ENCODE measurements at regions of chrX and their contacts with region 1.

Region 1: DNA sequence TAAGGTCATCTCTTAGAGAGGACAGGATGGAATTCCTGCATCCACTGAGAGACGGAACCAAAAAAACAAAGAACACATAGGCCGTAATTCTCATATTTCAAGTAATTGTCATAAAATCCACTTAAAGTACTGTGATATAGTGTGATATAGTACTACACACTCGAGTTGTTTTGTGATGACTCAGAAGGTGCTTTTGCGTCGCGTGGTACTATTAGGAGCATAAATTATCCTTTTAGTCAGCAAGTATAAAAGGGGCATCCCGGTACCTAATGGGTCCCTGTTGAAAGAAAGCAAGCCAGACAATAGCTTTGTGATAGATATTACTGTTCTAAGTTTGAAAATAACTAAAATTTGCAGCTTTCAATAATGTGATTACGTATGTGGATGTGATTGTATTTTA is 55.3 kb downstream of the GPR143 start:
- DNase-seq: no peak
- H3K4me3 ChIP-seq: no peak overlapping the region
- H3K27ac ChIP-seq: no peak overlapping the region
- H3K4me1 ChIP-seq: peaks cover 0 to 9% (median 0%) of the 10 kb centered on the region in 3 donors
- H3K27me3 ChIP-seq: no peaks in the 10 kb centered on the region
- CTCF ChIP-seq: no peak
- POLR2A ChIP-seq: no peak

Region 2: GRCh38 chrX:8820910-8821527 is 889.3 kb before region 1 on chrX:
- intact Hi-C with region 1: loop called (anchors 10 kb)
- DNase-seq: no peak
- H3K4me3 ChIP-seq: no peak overlapping the region
- H3K27ac ChIP-seq: no peak overlapping the region
- H3K4me1 ChIP-seq: no peaks in the 10 kb centered on the region
- H3K27me3 ChIP-seq: no peaks in the 10 kb centered on the region
- CTCF ChIP-seq: no peak
- POLR2A ChIP-seq: no peak

Region 3: GRCh38 chrX:9656277-9656676 is 54.1 kb before region 1 on chrX:
- intact Hi-C with region 1: no loop called
- DNase-seq: no peak
- H3K4me3 ChIP-seq: no peak overlapping the region
- H3K27ac ChIP-seq: no peak overlapping the region
- H3K4me1 ChIP-seq: no peaks in the 10 kb centered on the region
- H3K27me3 ChIP-seq: no peaks in the 10 kb centered on the region
- CTCF ChIP-seq: no peak
- POLR2A ChIP-seq: no peak

Region 4: DNA sequence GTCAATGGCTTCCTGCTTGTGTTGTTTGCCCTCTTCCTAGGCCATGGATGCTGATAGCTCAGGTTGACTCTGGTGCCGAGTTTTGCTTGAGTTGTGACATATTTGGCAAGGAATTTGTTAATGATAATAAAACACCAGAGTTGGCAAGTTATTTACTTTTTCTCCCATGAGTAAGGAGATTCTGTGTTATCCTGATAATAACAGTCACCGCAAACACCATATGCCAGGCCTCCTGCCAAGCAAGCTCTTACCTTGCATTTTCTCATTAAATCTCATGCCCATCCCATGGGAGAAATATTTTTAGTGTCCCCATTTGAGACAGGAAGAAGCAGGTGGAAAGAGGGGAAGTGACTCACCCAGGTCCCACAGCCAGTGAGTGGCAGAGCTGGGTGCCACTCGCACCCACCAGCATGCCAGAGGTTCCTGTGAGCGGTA is 379.1 kb after region 1 on chrX:
- intact Hi-C with region 1: no loop called
- DNase-seq: no peak
- H3K4me3 ChIP-seq: no peak overlapping the region
- H3K27ac ChIP-seq: peak overlapping the region in 1 of 4 donors; percentile 14
- H3K4me1 ChIP-seq: peaks cover 0 to 26% (median 0%) of the 10 kb centered on the region in 3 donors
- H3K27me3 ChIP-seq: no peaks in the 10 kb centered on the region
- CTCF ChIP-seq: no peak
- POLR2A ChIP-seq: no peak